HepG2 (cell line): ENCODE measurements at regions of chr22 and their contacts with region 1.

Region 1: DNA sequence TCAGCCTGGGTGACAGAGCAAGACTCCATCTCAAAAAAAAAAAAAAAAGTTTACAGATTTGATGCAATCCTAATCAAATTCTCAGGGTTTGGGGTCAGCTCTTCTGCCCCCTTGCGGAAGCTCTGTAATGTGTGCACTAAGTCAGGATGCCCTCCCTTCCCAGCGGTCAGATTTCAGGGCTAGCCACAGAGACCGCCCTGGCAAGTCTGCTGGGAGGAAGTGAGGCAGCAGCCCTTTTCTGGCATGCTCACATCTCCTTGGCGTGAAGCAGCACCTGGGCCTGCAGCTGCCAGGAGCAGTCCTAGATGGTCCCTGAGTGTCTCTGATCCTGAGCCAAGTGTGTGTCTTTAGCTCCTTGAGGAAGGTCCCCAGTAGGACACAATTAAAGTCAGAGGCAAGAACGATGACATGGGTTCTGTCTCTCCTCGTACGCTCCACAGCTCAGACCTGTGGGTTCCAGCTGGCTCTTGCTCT is 10.9 kb upstream of the APOBEC3C start:
- DNase-seq: peak; percentile 66
- ATAC-seq: peak; percentile 92
- H3K4me3 ChIP-seq: no peak overlapping the region; a peak in 1 of 6 replicates
- H3K27ac ChIP-seq: no peak overlapping the region
- H3K4me1 ChIP-seq: no peaks in the 10 kb centered on the region
- H3K27me3 ChIP-seq: peaks cover 0 to 9% of the 10 kb centered on the region in 2 experiments; a peak in 2 of 5 replicates
- CTCF ChIP-seq: peak; percentile 81
- EP300 ChIP-seq: no peak
- POLR2A ChIP-seq: no peak
- RAD21 ChIP-seq: peak; percentile 55; the same call in 1 of the 2 replicates

Region 2: DNA sequence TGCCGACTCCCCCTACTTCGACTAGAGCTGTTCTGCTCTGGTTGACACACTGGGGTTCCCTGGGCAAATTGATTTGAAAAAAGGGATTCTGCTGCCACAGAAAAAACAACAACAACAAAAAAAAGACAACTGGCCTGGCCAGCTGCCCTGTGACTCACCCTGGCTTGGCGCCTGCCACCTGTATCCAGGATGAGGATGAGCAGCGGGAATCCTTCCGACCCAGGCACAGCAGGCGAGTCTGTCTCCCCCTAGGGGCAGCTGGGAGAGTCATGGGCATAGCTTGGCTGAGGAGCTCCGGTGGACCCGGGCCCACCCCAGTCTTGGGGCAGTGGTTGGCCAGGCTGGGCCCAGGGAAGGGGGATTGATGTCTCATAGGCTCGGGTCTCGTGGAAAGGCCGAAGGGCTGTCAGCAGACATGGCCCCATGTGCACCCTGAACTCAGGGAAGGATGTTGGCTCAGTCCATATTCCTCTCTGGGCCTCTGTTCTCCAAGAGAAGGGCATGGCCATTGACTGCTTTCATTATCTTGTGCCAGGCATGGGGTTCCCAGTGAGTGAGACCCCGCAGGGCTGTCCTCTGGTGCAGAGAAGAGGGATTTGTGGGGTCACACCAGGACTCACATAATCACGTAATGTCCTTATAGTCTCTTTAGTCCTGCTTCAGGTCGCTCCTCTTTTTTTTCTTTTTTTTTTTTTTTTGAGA is 237.0 kb before region 1 on chr22:
- CTCF ChIA-PET with region 1: interaction called, 3 read pairs
- POLR2A ChIA-PET with region 1: no interaction called
- in situ Hi-C with region 1: no loop called
- intact Hi-C with region 1: loop called (anchors 10 kb)
- DNase-seq: peak; percentile 74
- ATAC-seq: peak; percentile 89
- H3K4me3 ChIP-seq: no peak overlapping the region
- H3K27ac ChIP-seq: no peak overlapping the region
- H3K4me1 ChIP-seq: peaks cover 40% of the 10 kb centered on the region
- H3K27me3 ChIP-seq: peaks cover 2 to 33% of the 10 kb centered on the region in 2 experiments; a peak in 4 of 5 replicates
- CTCF ChIP-seq: peak; percentile 93
- EP300 ChIP-seq: no peak
- POLR2A ChIP-seq: no peak
- RAD21 ChIP-seq: peak; percentile 73

Region 3: DNA sequence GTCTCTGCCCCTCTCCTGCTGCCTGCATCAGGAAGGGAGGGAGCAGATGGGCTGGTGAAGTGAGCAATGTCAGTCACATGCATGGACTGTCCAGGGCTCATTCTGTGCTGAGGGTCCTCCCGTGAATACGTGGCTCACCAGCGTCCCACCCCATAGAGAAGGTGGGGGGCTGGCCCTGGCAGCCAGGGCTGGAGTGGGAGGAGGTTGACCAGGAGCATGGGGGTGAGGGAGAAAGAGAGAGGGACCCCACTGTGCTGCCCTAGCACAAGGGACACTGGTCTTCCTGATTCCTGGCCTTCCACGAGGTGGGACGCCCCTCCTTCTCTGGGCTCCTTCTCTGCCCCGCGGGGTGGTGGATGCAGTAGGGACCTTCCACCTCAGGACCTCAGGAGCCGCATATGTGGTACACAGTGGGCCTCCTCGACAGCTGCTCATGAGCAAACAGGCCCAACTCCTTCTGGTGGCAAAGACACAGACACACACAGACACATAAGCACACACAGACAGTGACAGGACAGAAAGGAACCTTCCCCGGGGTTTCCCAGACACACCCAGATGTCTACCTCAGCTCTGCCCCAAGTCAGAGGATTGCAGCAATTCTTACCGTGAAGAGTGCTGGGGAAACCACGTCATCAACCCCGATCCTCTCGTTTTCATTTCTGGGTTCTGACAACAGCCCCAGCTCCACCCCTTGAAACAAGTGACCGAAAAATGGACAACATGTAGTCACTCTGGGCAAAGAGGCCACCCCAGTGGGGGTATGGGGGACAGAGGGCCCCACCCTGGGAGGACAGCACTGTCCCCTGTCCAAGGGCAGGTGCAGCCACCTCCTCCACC is 49.4 kb before region 1 on chr22:
- CTCF ChIA-PET with region 1: no interaction called
- POLR2A ChIA-PET with region 1: no interaction called
- in situ Hi-C with region 1: no loop called
- intact Hi-C with region 1: no loop called
- DNase-seq: no peak
- ATAC-seq: no peak
- H3K4me3 ChIP-seq: no peak overlapping the region
- H3K27ac ChIP-seq: no peak overlapping the region
- H3K4me1 ChIP-seq: peaks cover 18% of the 10 kb centered on the region
- H3K27me3 ChIP-seq: peaks cover 1 to 28% of the 10 kb centered on the region in 2 experiments
- CTCF ChIP-seq: no peak
- EP300 ChIP-seq: no peak
- POLR2A ChIP-seq: no peak
- RAD21 ChIP-seq: no peak

Region 4: GRCh38 chr22:38973289-38974169 is 29.7 kb before region 1 on chr22:
- CTCF ChIA-PET with region 1: interaction called, 16 read pairs
- POLR2A ChIA-PET with region 1: no interaction called
- in situ Hi-C with region 1: no loop called
- intact Hi-C with region 1: loop called (anchors 2 kb)
- DNase-seq: peak; percentile 42
- ATAC-seq: peak; percentile 83
- H3K4me3 ChIP-seq: no peak overlapping the region
- H3K27ac ChIP-seq: no peak overlapping the region
- H3K4me1 ChIP-seq: no peaks in the 10 kb centered on the region
- H3K27me3 ChIP-seq: peaks cover 1 to 11% of the 10 kb centered on the region in 2 experiments; a peak in 1 of 5 replicates
- CTCF ChIP-seq: peak; percentile 86
- EP300 ChIP-seq: no peak
- POLR2A ChIP-seq: no peak
- RAD21 ChIP-seq: peak; percentile 44; the same call in 1 of the 2 replicates

Region 5: DNA sequence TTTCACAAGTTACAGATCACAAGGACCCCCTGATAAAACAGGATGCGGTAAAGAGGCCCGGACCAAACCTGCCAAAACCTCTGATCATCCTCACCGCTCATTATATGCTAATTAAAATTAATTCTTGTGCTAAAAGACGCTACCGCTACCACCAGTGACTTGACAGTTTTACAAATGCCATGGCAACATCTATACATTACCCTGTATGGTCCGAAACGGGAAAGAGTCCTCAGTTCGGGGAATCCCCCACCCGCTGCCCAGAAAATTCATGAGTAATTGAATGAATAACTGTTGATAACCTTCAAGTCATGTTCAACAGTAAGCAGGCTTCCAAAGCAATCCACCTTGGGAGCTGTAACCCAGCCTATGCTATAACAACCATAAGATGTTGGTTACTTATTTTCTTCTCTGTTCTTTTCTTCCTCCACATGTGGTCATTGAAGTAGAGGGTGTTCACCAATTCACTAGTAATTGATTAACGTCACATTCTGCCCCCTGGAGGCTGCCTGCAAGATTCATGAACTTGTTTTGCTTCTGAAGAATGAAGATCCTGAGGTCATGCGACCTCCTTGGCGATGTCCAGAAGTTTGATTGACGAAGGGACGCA is 114.5 kb after region 1 on chr22:
- CTCF ChIA-PET with region 1: interaction called, 19 read pairs
- POLR2A ChIA-PET with region 1: no interaction called
- in situ Hi-C with region 1: no loop called
- intact Hi-C with region 1: no loop called
- DNase-seq: peak; percentile 60
- ATAC-seq: peak; percentile 49; the same call in 2 of the 3 replicates
- H3K4me3 ChIP-seq: no peak overlapping the region
- H3K27ac ChIP-seq: no peak overlapping the region
- H3K4me1 ChIP-seq: 0 out of 2 replicates have a peak, but pooled peaks cover 6% of the 10 kb centered on the region
- H3K27me3 ChIP-seq: 0 out of 5 replicates have a peak, but pooled peaks cover 0 to 11% of the 10 kb centered on the region in 2 experiments
- CTCF ChIP-seq: peak; percentile 72
- EP300 ChIP-seq: no peak
- POLR2A ChIP-seq: no peak
- RAD21 ChIP-seq: no peak